Tibial artery (tissue), 4 donors: ENCODE measurements at regions of chr10 and their contacts with region 1.

Region 1: GRCh38 chr10:124916585-124917427 is 25.1 kb upstream of the ZRANB1 start:
- DNase-seq: peak; percentile 97 to 98
- H3K4me3 ChIP-seq: peak overlapping the region; percentile 82 to 95
- H3K27ac ChIP-seq: peak overlapping the region; percentile 96 to 97
- H3K4me1 ChIP-seq: peaks cover 0 to 51% (median 21%) of the 10 kb centered on the region in 4 donors
- H3K27me3 ChIP-seq: no peaks in the 10 kb centered on the region
- CTCF ChIP-seq: no peak

Region 2: GRCh38 chr10:124306922-124307371 is 609.9 kb before region 1 on chr10:
- intact Hi-C with region 1: no loop called
- DNase-seq: peak in 1 of 2 donors; percentile 60
- H3K4me3 ChIP-seq: no peak overlapping the region
- H3K27ac ChIP-seq: no peak overlapping the region
- H3K4me1 ChIP-seq: peaks cover 0 to 3% (median under 1%) of the 10 kb centered on the region in 4 donors
- H3K27me3 ChIP-seq: no peaks in the 10 kb centered on the region
- CTCF ChIP-seq: no peak

Region 3: DNA sequence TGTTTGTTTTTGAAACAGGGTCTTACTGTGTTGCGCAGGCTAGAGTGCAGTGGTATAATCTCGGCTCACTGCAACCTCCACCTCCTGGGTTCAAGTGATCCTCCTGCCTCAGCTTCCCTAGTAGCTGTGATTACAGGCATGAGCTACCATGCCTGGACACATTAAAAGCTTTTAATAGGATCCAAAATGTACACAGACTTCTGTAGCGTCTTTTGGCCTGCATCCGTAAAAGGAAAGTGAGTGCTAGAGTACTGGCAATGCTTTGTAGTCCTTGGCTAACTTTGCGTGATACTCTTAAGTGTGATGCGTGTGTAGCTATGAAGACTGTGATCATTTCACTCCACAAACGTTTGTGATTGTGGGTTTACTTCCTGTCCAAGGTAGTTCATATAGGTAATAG is 38.4 kb after region 1 on chr10:
- intact Hi-C with region 1: loop called (anchors 5 kb)
- DNase-seq: no peak
- H3K4me3 ChIP-seq: no peak overlapping the region
- H3K27ac ChIP-seq: no peak overlapping the region
- H3K4me1 ChIP-seq: peaks cover 0 to 19% (median 3%) of the 10 kb centered on the region in 4 donors
- H3K27me3 ChIP-seq: no peaks in the 10 kb centered on the region
- CTCF ChIP-seq: no peak

Region 4: DNA sequence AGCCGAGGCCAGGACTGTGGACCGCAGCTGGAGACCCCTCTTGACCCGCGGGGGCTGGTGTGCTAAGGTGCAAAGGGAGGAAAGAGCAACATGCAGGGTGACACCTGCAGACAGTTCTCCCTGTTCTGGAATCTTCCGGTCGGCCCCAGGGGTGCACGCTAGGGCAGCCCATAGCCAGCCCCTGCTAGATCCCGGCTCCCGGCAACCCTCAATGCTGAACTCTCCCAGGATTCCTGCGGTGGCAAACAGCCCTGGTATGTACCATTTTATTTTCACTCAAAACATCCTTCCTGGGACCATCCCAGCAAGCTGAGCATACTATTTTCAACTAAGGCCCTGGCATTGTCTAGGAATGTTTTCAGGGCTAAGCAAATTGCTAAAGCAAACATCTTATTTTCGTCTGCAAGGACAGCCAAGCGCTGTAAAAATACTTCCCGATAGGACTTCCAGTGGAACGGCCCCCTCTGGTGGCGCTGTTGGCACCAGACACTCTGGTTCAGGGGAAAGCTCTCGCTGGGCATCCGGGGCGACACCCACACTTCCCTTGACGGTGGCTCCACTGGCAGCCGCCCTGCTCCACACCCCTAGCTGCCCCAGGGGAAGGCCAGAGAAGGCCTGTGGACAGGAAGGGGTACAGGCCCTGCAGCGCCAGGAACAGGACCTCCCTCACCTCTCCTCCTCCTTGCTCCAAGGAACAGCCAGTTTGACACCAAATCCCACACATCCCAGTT is 144.2 kb after region 1 on chr10:
- intact Hi-C with region 1: loop called (anchors 10 kb)
- DNase-seq: peak; percentile 91 to 96
- H3K4me3 ChIP-seq: peak overlapping the region; percentile 19 to 43
- H3K27ac ChIP-seq: peak overlapping the region; percentile 92 to 94
- H3K4me1 ChIP-seq: peaks cover 17 to 99% (median 96%) of the 10 kb centered on the region in 4 donors
- H3K27me3 ChIP-seq: no peaks in the 10 kb centered on the region
- CTCF ChIP-seq: peak; percentile 88 to 93